AG04450 (cell line): ENCODE measurements at regions of chr3 and their contacts with region 1.

Region 1: GRCh38 chr3:120095226-120095978 is 1.2 kb upstream of the GSK3B start:
- DNase-seq: peak; percentile 74
- H3K4me3 ChIP-seq: peak overlapping the region; percentile 79
- H3K27ac ChIP-seq: peak overlapping the region; percentile 100
- H3K27me3 ChIP-seq: no peaks in the 10 kb centered on the region
- CTCF ChIP-seq: no peak

Region 2: DNA sequence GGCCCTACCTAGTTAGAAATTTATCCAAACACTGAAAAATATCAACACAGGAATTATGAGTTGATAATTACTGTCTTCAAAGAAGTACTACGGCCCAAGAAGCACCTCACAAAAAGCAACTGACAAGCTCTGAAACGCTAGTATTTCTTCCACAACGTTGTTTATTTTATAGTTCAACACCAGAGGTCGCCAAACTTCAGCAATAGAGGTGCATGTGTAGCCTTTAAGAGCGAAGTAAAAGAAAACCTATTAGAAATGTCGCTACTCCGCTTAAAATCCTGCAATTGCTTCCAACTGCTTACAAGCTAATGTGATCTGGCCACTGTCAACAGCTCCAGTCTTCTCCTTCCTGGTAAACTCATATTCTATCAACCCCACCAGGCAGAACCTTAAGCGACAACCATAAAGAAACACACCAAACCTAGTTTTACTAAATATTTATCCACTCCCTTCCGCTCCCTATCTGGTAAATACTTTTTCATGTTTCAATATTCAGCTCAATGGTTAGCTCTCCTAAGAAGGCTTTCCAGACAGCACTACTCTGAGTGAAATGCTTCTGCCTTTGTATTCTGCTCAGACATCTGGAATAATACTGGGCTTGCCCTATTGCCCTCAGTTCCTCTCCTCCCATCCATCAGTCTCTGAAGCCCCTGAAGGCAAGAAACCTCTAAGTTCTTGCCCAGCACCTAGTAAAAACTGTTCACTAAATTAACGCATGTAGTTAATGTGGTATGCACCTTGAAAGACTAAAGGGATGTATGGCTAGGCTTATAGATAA is 203.3 kb before region 1 on chr3:
- CTCF ChIA-PET with region 1: interaction called, 10 read pairs
- POLR2A ChIA-PET with region 1: interaction called, 11 read pairs
- DNase-seq: peak; percentile 38
- H3K4me3 ChIP-seq: no peak overlapping the region
- H3K27ac ChIP-seq: no peak overlapping the region
- H3K27me3 ChIP-seq: no peaks in the 10 kb centered on the region
- CTCF ChIP-seq: peak; percentile 72

Region 3: DNA sequence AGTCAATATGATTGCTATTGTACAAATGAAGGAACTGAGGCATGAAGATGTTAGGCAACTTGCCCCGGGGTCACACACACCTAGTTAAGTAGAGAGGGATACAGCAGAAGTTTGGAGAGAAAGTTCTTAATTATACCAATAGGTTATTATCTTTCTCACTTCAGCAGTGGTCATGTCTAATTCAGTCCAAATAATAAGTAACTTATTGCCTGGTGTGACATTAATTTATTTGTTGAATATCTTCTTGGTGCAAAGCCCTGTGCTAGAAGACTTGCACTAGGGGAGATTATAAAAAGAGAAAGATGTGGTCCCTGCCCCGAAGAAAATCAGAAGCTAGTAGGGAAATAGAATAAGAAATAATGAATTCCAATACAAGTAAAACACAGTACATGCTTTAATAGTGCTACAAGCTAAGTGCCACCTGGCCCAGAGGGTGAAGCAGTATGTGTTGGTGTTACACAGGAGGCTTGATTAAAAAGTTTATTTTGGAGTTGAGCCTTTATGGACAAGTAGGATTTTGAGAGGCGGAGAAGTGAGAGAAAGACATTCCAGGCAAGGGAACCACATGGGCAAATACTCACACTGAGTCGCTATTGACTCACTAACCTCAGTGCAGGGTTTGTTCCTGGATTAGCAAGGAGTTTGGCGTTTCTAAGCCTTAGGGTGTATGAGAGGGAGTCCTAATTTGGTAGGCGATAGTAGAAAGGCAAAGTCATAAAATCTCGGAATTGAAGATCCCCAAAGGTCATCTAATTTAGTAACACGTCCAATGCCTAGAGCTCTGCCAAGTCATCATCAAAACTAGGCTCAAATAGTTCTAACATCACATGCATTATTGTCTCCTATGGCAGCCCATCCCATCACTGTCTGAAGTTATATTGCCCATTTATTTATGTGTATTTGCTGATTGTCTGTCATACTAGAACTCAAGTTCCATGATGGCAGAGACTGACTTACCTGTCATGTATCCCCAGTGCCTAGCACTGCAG is 18.0 kb after region 1 on chr3:
- CTCF ChIA-PET with region 1: no interaction called
- POLR2A ChIA-PET with region 1: interaction called, 10 read pairs
- DNase-seq: peak; percentile 32
- H3K4me3 ChIP-seq: no peak overlapping the region
- H3K27ac ChIP-seq: no peak overlapping the region
- H3K27me3 ChIP-seq: no peaks in the 10 kb centered on the region
- CTCF ChIP-seq: no peak

Region 4: DNA sequence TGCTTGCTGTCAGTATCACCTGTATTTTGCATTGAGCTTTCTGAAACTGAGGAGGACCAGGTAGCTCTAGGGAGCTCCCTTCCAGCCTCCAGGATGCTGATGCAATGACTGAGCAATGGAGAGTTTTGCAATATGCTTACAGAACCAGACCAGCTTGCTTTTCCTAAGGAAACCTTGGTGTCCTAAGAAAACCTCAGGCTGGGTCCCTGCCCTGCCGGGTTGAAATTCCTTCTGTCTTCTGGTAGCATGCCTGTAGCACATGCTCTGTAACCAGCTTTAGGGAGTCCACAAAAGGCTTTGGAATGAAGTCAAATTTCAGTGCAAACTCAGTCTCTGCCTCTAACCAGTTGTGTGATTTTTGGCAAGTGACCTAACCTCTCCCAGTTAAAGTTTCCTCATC is 64.6 kb after region 1 on chr3:
- CTCF ChIA-PET with region 1: no interaction called
- POLR2A ChIA-PET with region 1: interaction called, 25 read pairs
- DNase-seq: peak; percentile 94
- H3K4me3 ChIP-seq: no peak overlapping the region
- H3K27ac ChIP-seq: peak overlapping the region; percentile 88
- H3K27me3 ChIP-seq: no peaks in the 10 kb centered on the region
- CTCF ChIP-seq: no peak

Region 5: DNA sequence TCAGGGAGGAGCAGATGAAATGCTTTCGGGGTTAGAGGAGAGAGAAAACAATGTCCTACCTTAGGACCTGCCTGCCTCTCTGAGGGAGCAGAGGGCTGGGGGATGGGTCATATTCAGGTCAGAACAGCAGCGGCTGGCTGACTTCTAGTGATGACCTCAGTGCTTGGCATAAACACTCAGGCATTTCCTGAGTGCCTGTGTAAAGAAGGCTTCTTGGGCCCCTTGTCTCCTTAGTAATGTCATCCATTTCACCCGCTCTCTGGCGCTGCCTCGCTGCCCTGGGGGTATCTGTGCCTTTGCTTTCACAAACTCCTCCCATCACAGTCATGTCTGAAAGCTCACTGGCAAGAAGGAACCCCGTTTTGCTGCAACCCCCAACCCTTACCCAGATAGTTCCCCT is 81.7 kb after region 1 on chr3:
- CTCF ChIA-PET with region 1: no interaction called
- POLR2A ChIA-PET with region 1: interaction called, 11 read pairs
- DNase-seq: peak; percentile 50
- H3K4me3 ChIP-seq: peak overlapping the region; percentile 13; the same call in 1 of the 2 replicates
- H3K27ac ChIP-seq: peak overlapping the region; percentile 82
- H3K27me3 ChIP-seq: no peaks in the 10 kb centered on the region
- CTCF ChIP-seq: peak; percentile 24; the same call in 1 of the 2 replicates

Region 6: DNA sequence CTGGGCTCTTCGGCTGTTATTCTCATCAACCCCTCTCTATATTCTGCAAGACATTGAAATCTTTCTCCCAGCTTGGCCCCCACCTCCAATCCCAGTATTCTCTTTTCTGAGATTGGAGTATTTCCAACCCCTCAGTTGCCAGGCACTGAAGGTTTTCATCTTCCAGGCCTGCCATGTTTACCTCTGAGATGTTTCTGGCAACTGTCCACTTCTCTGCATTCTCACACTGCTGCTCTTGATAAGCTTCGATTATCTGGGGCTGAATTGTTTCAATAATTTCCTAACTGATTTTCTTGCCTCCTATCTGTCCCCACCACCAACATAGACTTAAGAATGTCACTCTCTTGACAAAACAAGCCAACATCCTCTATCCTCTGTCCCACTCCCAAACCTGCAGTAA is 191.1 kb after region 1 on chr3:
- CTCF ChIA-PET with region 1: no interaction called
- POLR2A ChIA-PET with region 1: no interaction called
- DNase-seq: no peak
- H3K4me3 ChIP-seq: no peak overlapping the region
- H3K27ac ChIP-seq: no peak overlapping the region
- H3K27me3 ChIP-seq: peaks cover 31% of the 10 kb centered on the region
- CTCF ChIP-seq: no peak

Region 7: DNA sequence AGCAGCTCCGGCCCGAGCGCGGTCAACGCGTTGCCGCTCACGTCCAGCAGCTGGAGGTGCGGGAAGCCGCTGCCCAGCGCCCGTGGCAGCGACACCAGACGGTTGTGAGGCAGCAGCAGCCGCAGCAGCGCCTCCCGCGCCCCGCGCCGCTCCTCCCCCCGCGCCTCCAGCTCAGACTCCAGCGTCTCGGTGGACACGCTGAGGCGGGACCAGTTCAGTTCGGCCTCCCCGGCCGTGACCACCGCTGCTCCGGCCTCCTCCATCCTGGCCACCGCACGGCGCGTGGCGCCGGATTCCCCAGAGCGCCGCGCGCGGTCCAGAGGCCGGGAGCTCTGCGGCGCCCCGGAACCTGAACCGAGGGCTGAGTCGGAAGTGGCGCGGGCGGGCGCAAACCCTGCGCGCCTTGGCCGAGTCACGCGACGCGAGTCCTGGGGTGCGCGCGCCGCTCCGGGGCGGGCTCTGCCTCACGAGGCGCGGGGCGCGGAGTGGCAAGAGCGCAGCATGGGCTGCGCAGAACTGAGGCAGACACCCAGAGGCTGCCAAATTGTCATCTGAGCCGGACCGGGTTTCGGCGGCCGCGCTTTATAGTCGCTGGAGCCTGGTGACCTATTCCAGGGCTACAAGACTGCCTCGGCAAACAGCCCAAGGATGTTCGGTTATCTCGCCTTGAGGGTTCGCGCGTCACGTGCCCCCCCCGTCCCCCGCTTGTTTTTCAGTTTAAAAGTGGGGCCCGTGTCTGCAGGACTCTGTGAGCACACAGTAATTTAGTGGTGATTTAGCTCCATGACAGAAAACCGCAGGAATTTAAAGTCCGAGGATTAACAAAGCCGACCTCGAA is 253.8 kb after region 1 on chr3 and contains the start of gene LRRC58:
- CTCF ChIA-PET with region 1: no interaction called
- POLR2A ChIA-PET with region 1: interaction called, 10 read pairs
- DNase-seq: peak; percentile 74
- H3K4me3 ChIP-seq: peak within 1 kb of the TSS; percentile 84
- H3K27ac ChIP-seq: peak within 1 kb of the TSS; percentile 91
- H3K27me3 ChIP-seq: no peaks in the 10 kb centered on the region
- CTCF ChIP-seq: peak; percentile 33; the same call in 1 of the 2 replicates
- polyA plus RNA-seq, gene LRRC58: 9.9 and 15.0 TPM in 2 replicates